Prostate gland (tissue), 2 donors: ENCODE measurements at regions of chr3 and their contacts with region 1.

Region 1: DNA sequence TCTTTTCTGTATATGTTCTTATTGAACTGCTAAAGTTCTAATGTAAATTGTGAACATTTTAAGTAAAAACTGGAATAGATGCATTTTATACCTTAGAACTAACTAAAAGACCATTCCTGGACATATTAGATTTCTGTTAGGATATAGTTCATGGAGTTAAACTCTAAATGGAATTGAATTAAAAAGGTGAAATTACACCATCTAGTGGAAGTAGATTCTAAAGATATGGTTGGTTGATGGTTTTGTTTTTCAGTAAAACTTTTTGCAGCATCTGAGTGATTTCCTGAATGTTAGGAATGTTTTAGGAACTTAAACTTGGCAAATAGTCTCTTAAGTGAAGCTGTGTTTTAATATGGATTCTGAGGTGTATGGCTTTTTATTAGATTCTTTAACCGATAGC is 96.8 kb downstream of the SLMAP start:
- DNase-seq: no peak
- H3K4me3 ChIP-seq: no peak overlapping the region
- H3K27ac ChIP-seq: no peak overlapping the region
- H3K4me1 ChIP-seq: no peaks in the 10 kb centered on the region
- H3K27me3 ChIP-seq: no peaks in the 10 kb centered on the region
- CTCF ChIP-seq: peak in 3 of 4 experiments; percentile 26 to 43 (median 43)
- POLR2A ChIP-seq: no peak

Region 2: DNA sequence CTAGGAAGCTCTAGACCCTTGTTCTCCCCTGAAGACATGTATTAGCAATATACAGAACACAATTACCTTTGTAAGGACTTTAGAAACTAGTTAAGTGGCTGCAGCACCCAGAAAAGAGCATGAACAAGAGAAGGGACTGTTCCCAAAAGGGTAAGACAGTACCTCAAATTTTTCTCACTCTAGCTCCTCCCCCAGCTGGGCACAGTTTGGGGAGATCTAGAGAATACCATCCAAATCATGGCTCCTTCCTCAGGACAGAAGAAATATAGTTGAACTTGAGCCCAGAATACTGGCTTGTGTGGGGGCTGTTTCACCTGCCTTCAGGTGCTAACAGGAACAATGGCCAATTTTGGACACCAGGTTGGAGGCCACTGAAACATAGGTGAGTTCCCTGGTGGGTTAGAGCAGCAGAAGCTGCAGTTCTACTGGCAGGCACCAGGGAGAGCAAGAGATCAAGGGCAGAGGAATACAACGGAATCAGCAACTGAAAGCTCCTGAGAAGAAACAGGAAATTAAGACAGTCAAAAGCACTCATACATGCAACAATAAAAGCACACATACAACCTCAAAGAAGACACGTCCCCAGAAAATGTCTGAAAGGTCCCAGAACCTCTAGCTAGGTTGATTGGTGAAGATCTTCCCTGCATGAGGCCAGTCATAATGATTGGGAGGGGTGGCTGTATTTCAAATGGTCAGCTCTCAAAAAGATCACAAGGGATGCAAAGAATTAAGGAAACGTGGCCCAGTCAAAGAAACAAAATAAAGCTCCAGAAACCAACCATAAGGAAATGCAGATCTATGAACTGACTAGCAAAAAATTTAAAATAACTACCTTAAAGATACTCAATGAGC is 455.5 kb before region 1 on chr3:
- intact Hi-C with region 1: loop called (anchors 10 kb)
- DNase-seq: peak; percentile 7
- H3K4me3 ChIP-seq: no peak overlapping the region
- H3K27ac ChIP-seq: no peak overlapping the region
- H3K4me1 ChIP-seq: no peaks in the 10 kb centered on the region
- H3K27me3 ChIP-seq: no peaks in the 10 kb centered on the region
- CTCF ChIP-seq: peak; percentile 33 to 74 (median 58)
- POLR2A ChIP-seq: no peak